A673 (cell line): ENCODE measurements at regions of chr7 and their contacts with region 1.

Region 1: DNA sequence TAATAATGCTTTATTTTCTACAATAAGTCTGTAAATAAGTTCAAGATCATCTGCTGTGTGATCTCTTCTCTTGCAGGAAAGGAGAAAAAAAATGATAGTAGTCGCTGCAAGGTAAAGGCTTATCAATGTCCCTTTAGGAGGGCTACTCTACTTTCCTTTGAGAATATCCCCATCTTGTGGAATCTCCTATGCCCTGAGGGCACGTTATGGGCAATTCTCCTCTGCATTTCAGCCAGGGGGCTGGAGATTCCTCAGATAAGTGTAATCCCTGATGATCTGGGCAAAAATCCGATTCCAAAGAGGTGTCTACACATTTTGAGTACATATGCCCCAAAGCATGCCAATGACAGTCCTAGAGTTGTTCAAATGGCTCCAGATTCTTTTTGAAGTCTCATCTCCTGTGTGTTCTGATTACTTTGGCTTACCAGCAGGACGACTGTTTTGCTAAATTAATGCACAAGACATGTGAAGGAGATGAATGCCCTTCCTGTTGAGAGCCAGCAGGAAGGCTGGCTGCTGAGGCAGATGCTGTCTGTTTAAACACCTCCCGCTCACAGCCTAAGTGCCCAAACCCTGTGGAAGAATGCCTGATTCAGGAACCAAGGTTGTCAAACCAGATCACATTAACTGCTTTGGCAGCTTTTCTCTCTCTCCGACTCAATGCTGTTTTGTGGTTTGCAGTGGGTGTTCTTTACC is 171.2 kb upstream of the COL1A2 start:
- DNase-seq: peak; percentile 97
- H3K4me3 ChIP-seq: peak overlapping the region; percentile 12
- H3K27ac ChIP-seq: peak overlapping the region; percentile 52
- H3K4me1 ChIP-seq: peaks cover 46% of the 10 kb centered on the region
- H3K27me3 ChIP-seq: no peaks in the 10 kb centered on the region
- CTCF ChIP-seq: peak; percentile 76

Region 2: DNA sequence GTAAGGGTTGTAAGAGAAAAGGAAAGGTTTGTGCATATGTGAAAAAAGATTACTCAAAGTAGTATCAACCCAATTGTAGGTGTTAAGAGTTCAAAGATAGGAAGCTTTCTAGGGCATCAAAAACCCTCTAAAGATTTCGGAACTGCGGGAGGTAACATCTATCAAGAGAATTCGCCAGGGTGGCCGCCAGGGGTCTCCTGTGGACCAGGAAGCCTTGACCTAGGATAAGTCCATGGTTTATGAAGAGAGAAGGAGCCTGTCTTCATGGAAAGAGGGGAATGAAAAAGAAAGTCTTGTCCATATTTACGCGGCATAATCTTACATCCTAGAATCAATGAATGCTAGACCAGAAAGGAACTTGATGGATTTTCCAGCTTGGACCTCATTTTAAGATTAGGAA is 508.3 kb before region 1 on chr7:
- CTCF ChIA-PET with region 1: no interaction called
- POLR2A ChIA-PET with region 1: no interaction called
- intact Hi-C with region 1: loop called (anchors 5 kb)
- DNase-seq: peak; percentile 68
- H3K4me3 ChIP-seq: no peak overlapping the region
- H3K27ac ChIP-seq: no peak overlapping the region
- H3K4me1 ChIP-seq: no peaks in the 10 kb centered on the region
- H3K27me3 ChIP-seq: peaks cover 5% of the 10 kb centered on the region
- CTCF ChIP-seq: peak; percentile 77

Region 3: DNA sequence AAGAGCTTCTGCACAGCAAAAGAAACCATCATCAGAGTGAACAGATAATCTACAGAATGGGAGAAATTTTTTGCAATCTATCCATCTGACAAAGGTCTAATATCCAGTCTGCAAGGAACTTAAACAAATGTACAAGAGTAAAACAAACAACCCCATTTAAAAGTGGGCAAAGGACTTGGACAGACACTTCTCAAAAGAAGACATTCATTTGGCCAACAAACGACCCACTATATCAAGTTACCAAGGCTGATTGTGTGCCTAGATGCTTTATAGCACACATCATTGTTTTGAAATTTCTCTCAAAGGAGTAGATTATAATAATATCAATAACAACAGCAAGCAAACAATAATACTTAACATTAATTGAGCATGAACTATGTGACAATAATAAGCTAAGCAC is 450.1 kb before region 1 on chr7:
- CTCF ChIA-PET with region 1: no interaction called
- POLR2A ChIA-PET with region 1: no interaction called
- intact Hi-C with region 1: no loop called
- DNase-seq: no peak
- H3K4me3 ChIP-seq: no peak overlapping the region
- H3K27ac ChIP-seq: no peak overlapping the region
- H3K4me1 ChIP-seq: no peaks in the 10 kb centered on the region
- H3K27me3 ChIP-seq: peaks cover 14% of the 10 kb centered on the region
- CTCF ChIP-seq: no peak

Region 4: DNA sequence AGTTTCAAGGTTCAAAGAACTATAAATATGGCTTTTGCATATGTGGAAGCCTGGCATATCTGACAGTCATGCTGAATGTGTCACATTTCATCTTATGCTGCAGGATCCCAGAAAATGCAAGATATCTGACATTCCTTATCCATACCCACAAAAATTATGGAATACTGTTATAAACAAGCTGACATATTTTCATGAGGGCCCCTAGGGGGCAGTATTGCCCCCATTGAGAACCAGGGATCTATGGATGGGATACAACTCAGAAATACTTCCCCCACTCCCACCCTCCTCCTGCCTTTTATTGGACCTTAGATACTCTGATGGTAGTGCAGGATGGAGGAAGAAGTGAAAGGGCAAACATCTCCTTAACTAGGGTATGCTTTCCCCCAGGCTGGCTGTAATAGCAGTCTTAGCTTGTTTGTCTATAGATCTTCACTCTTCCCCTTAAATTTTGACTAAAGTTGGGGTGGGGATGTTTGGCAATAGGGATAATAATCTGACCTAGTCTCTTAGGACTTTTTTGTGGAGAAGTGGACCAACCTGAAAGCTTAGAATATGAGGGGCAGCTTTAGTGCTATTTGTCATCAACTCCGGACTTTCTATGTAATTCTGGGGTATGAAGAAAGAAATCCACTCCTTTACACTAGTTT is 320.6 kb before region 1 on chr7:
- CTCF ChIA-PET with region 1: no interaction called
- POLR2A ChIA-PET with region 1: no interaction called
- intact Hi-C with region 1: loop called (anchors 2 kb)
- DNase-seq: peak; percentile 82
- H3K4me3 ChIP-seq: no peak overlapping the region
- H3K27ac ChIP-seq: no peak overlapping the region
- H3K4me1 ChIP-seq: peaks cover 2% of the 10 kb centered on the region
- H3K27me3 ChIP-seq: no peaks in the 10 kb centered on the region
- CTCF ChIP-seq: peak; percentile 89

Region 5: GRCh38 chr7:94087664-94088352 is 135.7 kb before region 1 on chr7:
- CTCF ChIA-PET with region 1: no interaction called
- POLR2A ChIA-PET with region 1: no interaction called
- intact Hi-C with region 1: loop called (anchors 5 kb)
- DNase-seq: peak; percentile 74
- H3K4me3 ChIP-seq: peak overlapping the region; percentile 20
- H3K27ac ChIP-seq: no peak overlapping the region
- H3K4me1 ChIP-seq: peaks cover 17% of the 10 kb centered on the region
- H3K27me3 ChIP-seq: no peaks in the 10 kb centered on the region
- CTCF ChIP-seq: peak; percentile 86